ENCODE measurements at regions of chr17 and their contacts with region 1.

Region 1: GRCh38 chr17:60421273-60421934 is 885 bp upstream of the CHCT1 start:
- DNase-seq: peak; percentile 37 to 64
- ATAC-seq: peak; percentile 89 to 95
- H3K4me3 ChIP-seq: peak overlapping the region; percentile 53 to 68 (median 59)
- H3K27ac ChIP-seq: peak overlapping the region in 3 of 4 donors; percentile 7 to 44 (median 39)
- H3K4me1 ChIP-seq: peaks cover 4 to 8% of the 10 kb centered on the region in 2 donors
- H3K27me3 ChIP-seq: no peaks in the 10 kb centered on the region
- CTCF ChIP-seq: peak; percentile 87 to 96 (median 94)
- POLR2A ChIP-seq: no peak

Region 2: GRCh38 chr17:60305141-60305540 is 116.3 kb before region 1 on chr17:
- in situ Hi-C with region 1: loop called in 1 of 4 experiments (anchors 25 kb)
- intact Hi-C with region 1: no loop called
- DNase-seq: no peak
- ATAC-seq: no peak
- H3K4me3 ChIP-seq: no peak overlapping the region
- H3K27ac ChIP-seq: no peak overlapping the region
- H3K4me1 ChIP-seq: peaks cover 7 to 23% of the 10 kb centered on the region in 2 donors
- H3K27me3 ChIP-seq: no peaks in the 10 kb centered on the region
- CTCF ChIP-seq: no peak
- POLR2A ChIP-seq: no peak

Region 3: GRCh38 chr17:60398227-60398959 is 23.0 kb before region 1 on chr17:
- in situ Hi-C with region 1: no loop called
- intact Hi-C with region 1: no loop called
- DNase-seq: no peak
- ATAC-seq: no peak
- H3K4me3 ChIP-seq: no peak overlapping the region
- H3K27ac ChIP-seq: peak overlapping the region in 1 of 4 donors; percentile 6
- H3K4me1 ChIP-seq: peaks cover 0 to 1% of the 10 kb centered on the region in 2 donors
- H3K27me3 ChIP-seq: no peaks in the 10 kb centered on the region
- CTCF ChIP-seq: no peak
- POLR2A ChIP-seq: no peak